Activated CD4-positive, alpha-beta T cell treated with anti-CD3 and anti-CD28 coated beads, Interleukin-2, amount 10 ng/mL, durations not matched to agents 24 days and 14 days (primary cell): ENCODE measurements at regions of chr4 and their contacts with region 1.

Region 1: DNA sequence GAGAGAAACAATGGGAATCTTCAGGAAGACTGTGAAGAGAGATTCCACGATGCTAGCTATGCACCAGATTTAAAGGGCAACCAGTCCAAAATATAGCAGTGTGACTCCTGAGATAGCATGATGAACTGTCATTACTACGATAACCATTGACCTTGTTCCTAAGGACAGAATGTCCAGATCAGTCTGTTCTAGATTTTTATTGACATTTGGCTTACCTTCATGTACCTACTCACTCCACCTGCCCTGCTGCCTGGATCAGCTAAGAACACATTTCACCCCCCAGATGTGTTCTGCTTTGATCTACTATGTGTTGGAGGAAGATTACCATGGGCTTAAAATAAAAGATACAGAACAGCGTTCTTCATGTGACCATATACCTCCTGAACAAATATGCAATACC is 50.1 kb downstream of the ELF2 start:
- DNase-seq: peak; percentile 47
- H3K4me3 Mint-ChIP-seq: no peak overlapping the region
- H3K27ac Mint-ChIP-seq: no peak overlapping the region
- H3K4me1 Mint-ChIP-seq: no peaks in the 10 kb centered on the region
- H3K27me3 Mint-ChIP-seq: no peaks in the 10 kb centered on the region

Region 2: GRCh38 chr4:139144911-139145551 is 18.1 kb after region 1 on chr4:
- intact Hi-C with region 1: loop called (anchors 1 kb)
- DNase-seq: no peak
- H3K4me3 Mint-ChIP-seq: no peak overlapping the region
- H3K27ac Mint-ChIP-seq: no peak overlapping the region
- H3K4me1 Mint-ChIP-seq: peaks cover 25% of the 10 kb centered on the region
- H3K27me3 Mint-ChIP-seq: no peaks in the 10 kb centered on the region